ENCODE measurements at regions of chr3 and their contacts with region 1.

Region 1: GRCh38 chr3:67113802-67114407 is 115.8 kb downstream of the KBTBD8 start:
- DNase-seq: peak; percentile 59
- ATAC-seq: peak; percentile 99
- H3K4me3 ChIP-seq: no peak overlapping the region
- H3K27ac ChIP-seq: no peak overlapping the region
- H3K4me1 ChIP-seq: no peaks in the 10 kb centered on the region
- H3K27me3 ChIP-seq: no peaks in the 10 kb centered on the region
- CTCF ChIP-seq: peak; percentile 94 to 98 (median 98)
- EP300 ChIP-seq: no peak
- POLR2A ChIP-seq: no peak
- RAD21 ChIP-seq: peak; percentile 92

Region 2: DNA sequence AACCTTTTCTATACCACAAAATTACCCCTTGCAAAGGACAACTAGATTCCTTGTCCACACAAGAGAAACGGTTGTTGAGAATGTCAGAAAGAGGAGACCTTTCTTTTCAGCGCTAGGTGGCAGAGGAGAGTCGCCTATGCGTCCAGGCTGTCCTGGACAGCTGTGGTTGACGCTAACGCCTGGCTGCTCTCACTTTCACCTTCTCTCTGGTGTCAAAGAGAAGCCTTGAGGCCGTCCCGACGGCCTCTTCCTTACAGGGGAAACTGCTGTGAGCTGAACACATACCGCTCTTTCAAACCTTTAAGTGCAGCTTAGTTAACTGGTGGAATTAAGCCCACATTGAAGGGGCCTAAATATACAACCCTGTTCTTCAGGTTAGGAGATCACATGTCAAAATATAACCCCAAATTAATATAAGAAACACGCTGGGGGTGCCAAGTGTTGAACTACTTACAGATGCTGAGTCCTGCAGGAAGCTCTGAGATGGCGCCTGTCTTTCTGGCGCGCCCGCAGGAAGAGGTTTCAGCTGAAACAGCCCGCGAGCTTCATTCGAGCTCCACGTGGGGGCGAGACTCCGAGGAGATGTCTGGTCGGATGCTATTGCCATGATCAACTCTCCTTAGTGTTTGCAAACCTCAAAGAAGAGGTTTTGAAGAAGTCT is 141.9 kb before region 1 on chr3:
- CTCF ChIA-PET with region 1: interaction called, 34 read pairs
- POLR2A ChIA-PET with region 1: no interaction called
- RAD21 ChIA-PET with region 1: interaction called, 22 read pairs
- SMC1A ChIA-PET with region 1: interaction called, 16 read pairs
- in situ Hi-C with region 1: no loop called
- intact Hi-C with region 1: loop called (anchors 2 kb)
- DNase-seq: peak; percentile 45
- ATAC-seq: peak; percentile 100
- H3K4me3 ChIP-seq: peak overlapping the region; percentile 6; the same call in 1 of the 2 replicates
- H3K27ac ChIP-seq: no peak overlapping the region
- H3K4me1 ChIP-seq: no peaks in the 10 kb centered on the region
- H3K27me3 ChIP-seq: peaks cover 0 to 2% of the 10 kb centered on the region in 2 experiments; a peak in 1 of 4 replicates
- CTCF ChIP-seq: peak; percentile 90 to 92 (median 90)
- EP300 ChIP-seq: no peak
- POLR2A ChIP-seq: no peak
- RAD21 ChIP-seq: peak; percentile 87

Region 3: GRCh38 chr3:67048067-67048714 is 65.7 kb before region 1 on chr3:
- CTCF ChIA-PET with region 1: interaction called, 17 read pairs
- POLR2A ChIA-PET with region 1: no interaction called
- RAD21 ChIA-PET with region 1: interaction called, 3 read pairs
- SMC1A ChIA-PET with region 1: interaction called, 4 read pairs
- in situ Hi-C with region 1: no loop called
- intact Hi-C with region 1: loop called (anchors 5 kb)
- DNase-seq: peak; percentile 47
- ATAC-seq: peak; percentile 94
- H3K4me3 ChIP-seq: no peak overlapping the region
- H3K27ac ChIP-seq: peak overlapping the region; percentile 54
- H3K4me1 ChIP-seq: peaks cover 24% of the 10 kb centered on the region
- H3K27me3 ChIP-seq: no peaks in the 10 kb centered on the region
- CTCF ChIP-seq: no peak
- EP300 ChIP-seq: peak in 1 of 2 experiments; percentile 78; a peak in 3 of 4 replicates
- POLR2A ChIP-seq: no peak
- RAD21 ChIP-seq: no peak

Region 4: DNA sequence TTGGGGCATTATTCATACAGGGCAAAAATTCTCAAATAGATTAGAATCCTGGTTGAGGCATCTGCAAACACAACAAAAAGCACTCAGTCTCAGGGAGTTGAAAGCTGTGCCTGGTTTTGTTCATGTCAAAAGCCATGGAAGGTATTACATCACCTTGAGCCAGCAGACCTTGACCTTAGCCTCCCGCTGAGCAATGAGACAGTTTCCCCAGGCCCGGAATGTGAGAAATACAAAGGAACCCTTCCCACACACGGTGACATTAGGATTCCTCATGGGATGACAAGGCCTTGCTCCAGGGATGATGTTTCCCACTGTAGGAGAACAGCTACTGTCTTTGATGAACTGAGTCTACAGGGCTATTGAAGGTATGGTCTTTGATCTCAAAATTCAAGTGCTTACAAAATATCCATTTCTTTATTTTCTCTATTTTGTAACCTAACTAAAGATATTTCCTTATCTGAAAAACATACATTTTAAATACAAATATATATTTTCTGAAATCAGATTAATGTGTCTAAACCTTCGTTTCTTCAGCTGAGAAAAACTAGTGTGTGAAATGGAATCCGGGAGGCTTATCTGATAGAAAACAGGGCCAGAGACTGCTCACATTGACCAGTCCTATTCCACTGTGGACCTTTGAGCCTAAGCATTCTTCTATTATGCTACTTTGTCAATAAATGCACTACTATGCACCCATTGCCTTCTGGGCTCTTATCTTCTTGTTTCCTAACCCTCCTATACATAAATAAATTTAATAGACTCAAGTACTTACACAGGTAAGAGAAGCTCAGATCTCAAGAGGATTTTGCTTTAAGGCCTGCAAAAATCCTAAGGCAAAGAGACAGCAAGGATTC is 182.4 kb after region 1 on chr3:
- CTCF ChIA-PET with region 1: no interaction called
- POLR2A ChIA-PET with region 1: no interaction called
- RAD21 ChIA-PET with region 1: no interaction called
- SMC1A ChIA-PET with region 1: no interaction called
- in situ Hi-C with region 1: no loop called
- intact Hi-C with region 1: no loop called
- DNase-seq: no peak
- ATAC-seq: no peak
- H3K4me3 ChIP-seq: no peak overlapping the region
- H3K27ac ChIP-seq: no peak overlapping the region
- H3K4me1 ChIP-seq: no peaks in the 10 kb centered on the region
- H3K27me3 ChIP-seq: no peaks in the 10 kb centered on the region
- CTCF ChIP-seq: no peak
- EP300 ChIP-seq: no peak
- POLR2A ChIP-seq: no peak
- RAD21 ChIP-seq: no peak

Region 5: GRCh38 chr3:67357610-67358458 is 243.9 kb after region 1 on chr3:
- CTCF ChIA-PET with region 1: interaction called, 33 read pairs
- POLR2A ChIA-PET with region 1: no interaction called
- RAD21 ChIA-PET with region 1: interaction called, 18 read pairs
- SMC1A ChIA-PET with region 1: interaction called, 16 read pairs
- in situ Hi-C with region 1: no loop called
- intact Hi-C with region 1: loop called (anchors 5 kb)
- DNase-seq: no peak
- ATAC-seq: peak; percentile 75
- H3K4me3 ChIP-seq: no peak overlapping the region
- H3K27ac ChIP-seq: no peak overlapping the region
- H3K4me1 ChIP-seq: no peaks in the 10 kb centered on the region; the same call in 1 of the 2 replicates
- H3K27me3 ChIP-seq: no peaks in the 10 kb centered on the region; a peak in 1 of 4 replicates
- CTCF ChIP-seq: peak; percentile 51 to 53 (median 53); a peak in 5 of 6 replicates
- EP300 ChIP-seq: no peak
- POLR2A ChIP-seq: no peak
- RAD21 ChIP-seq: peak; percentile 57

Region 6: DNA sequence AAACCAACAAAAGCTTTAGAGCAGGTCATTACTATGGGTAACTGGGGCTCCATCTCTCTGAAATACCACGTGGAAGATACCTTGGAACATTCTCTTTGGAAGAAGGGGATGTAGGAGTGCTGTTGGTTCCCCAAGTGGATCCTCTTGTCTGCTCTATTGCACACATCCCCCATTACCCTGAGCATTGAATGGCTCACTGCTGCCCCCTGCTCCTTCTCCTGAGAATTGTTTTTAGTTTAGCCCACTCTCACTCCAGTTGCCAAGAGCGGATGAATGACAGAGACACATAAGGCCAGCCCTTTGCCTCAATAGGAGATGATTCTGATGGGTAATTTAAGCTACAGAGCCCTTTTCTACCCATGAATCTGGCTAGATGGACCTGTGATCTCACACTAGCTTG is 676.1 kb after region 1 on chr3:
- CTCF ChIA-PET with region 1: interaction called, 18 read pairs
- POLR2A ChIA-PET with region 1: no interaction called
- RAD21 ChIA-PET with region 1: interaction called, 13 read pairs
- SMC1A ChIA-PET with region 1: interaction called, 13 read pairs
- in situ Hi-C with region 1: loop called (anchors 10 kb)
- intact Hi-C with region 1: loop called (anchors 1 kb)
- DNase-seq: peak; percentile 27
- ATAC-seq: peak; percentile 96
- H3K4me3 ChIP-seq: no peak overlapping the region
- H3K27ac ChIP-seq: no peak overlapping the region
- H3K4me1 ChIP-seq: no peaks in the 10 kb centered on the region
- H3K27me3 ChIP-seq: no peaks in the 10 kb centered on the region
- CTCF ChIP-seq: peak; percentile 72 to 76 (median 74)
- EP300 ChIP-seq: no peak
- POLR2A ChIP-seq: no peak
- RAD21 ChIP-seq: peak; percentile 94

Region 7: DNA sequence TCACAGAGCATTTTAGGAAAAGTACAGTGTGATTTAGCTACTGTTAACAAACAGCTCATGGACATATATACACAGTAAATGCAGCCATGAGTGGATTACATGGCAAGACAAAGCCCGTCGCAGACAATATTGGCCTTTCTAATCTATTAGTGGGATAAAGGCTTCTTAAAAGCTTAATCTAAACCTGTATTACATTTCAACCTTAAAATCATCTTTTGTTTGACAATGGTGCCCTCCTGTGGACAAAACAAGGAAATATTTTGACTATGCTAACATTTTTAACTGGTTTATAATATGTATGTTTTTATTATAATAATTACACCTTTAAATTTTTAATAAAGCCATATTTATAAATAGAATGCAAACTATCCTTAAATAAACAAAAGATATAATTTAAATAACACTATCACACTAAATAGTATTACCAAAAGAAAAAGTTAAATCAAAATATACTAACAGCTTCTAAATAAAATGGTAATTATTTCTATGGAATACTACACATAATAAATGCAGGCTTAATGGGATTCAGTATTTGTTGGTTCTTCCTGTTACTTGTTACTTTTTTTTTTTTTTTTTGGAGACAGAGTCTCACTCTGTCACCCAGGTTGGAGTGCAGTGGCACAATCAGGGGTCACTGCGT is 1779.8 kb after region 1 on chr3:
- CTCF ChIA-PET with region 1: interaction called, 22 read pairs
- POLR2A ChIA-PET with region 1: no interaction called
- RAD21 ChIA-PET with region 1: interaction called, 13 read pairs
- SMC1A ChIA-PET with region 1: no interaction called
- in situ Hi-C with region 1: loop called (anchors 5 kb)
- intact Hi-C with region 1: loop called (anchors 5 kb)
- DNase-seq: no peak
- ATAC-seq: no peak
- H3K4me3 ChIP-seq: no peak overlapping the region
- H3K27ac ChIP-seq: no peak overlapping the region
- H3K4me1 ChIP-seq: no peaks in the 10 kb centered on the region
- H3K27me3 ChIP-seq: no peaks in the 10 kb centered on the region
- CTCF ChIP-seq: peak; percentile 13 to 53 (median 47); a peak in 3 of 6 replicates
- EP300 ChIP-seq: no peak
- POLR2A ChIP-seq: no peak
- RAD21 ChIP-seq: peak; percentile 54

Measured in GM12878 (cell line).